Activated CD4-positive, alpha-beta T cell treated with anti-CD3 and anti-CD28 coated beads for 36 hours (primary cell): ENCODE measurements at regions of chrX and their contacts with region 1.

Region 1: DNA sequence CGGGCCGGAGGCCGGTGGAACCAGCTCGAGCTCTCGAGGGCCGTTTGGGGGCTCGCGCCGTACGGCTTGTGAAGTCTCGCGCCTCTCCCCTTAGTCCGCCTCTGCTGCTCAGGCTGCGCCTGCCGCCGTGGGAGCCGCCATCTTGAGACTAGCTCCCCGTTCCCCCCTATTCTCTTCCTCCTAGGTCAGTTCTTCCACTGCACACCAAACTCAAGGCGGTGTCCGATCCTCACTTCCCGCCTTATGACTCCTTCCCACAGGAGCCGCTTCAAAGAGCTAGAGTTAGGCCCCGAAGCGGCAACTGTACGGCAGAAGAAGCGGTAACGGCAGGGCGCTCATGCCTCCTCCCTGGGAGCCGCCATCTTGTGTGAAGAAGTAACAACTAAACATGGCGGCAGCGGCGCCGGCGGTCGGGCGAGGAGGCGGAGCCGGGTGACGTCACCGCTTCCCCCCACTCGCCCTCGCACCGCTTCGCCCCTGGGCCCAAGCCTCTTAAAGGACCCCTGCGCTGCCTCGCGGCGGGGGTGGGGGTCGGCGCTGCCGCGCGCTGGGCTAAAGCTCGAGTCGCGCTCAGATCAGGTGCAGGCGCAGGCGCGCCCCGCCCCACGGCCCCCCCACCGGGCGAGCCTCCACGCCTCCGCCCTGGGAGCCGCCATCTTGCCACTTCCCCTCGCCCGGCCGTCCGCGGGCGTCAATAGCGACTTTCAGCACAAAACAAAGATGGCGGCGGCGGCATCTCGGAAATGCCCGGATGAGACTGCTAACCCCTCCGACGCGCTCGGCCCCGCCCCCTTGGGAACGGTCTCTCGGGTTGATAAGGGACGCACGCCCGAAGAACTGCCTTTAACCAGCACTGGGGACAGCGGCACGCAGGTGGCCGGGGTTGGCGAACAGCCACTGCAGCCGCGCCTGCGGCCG is at the start of gene HCFC1:
- DNase-seq: peak; percentile 94
- ATAC-seq: peak; percentile 34
- H3K4me3 Mint-ChIP-seq: peak within 1 kb of the TSS; percentile 94
- H3K27ac Mint-ChIP-seq: peak within 1 kb of the TSS; percentile 100
- H3K4me1 Mint-ChIP-seq: peaks cover 31% of the 10 kb centered on the region
- H3K27me3 Mint-ChIP-seq: no peaks in the 10 kb centered on the region
- total RNA-seq, gene HCFC1: 99.5 to 147 TPM

Region 2: GRCh38 chrX:153599192-153600031 is 372.3 kb before region 1 on chrX:
- CTCF ChIA-PET with region 1: no interaction called
- POLR2A ChIA-PET with region 1: no interaction called
- intact Hi-C with region 1: loop called in 1 of 2 experiments (anchors 2 kb)
- DNase-seq: peak; percentile 92
- ATAC-seq: peak; percentile 94
- H3K4me3 Mint-ChIP-seq: peak overlapping the region; percentile 81
- H3K27ac Mint-ChIP-seq: peak overlapping the region; percentile 72
- H3K4me1 Mint-ChIP-seq: peaks cover 35% of the 10 kb centered on the region
- H3K27me3 Mint-ChIP-seq: no peaks in the 10 kb centered on the region

Region 3: DNA sequence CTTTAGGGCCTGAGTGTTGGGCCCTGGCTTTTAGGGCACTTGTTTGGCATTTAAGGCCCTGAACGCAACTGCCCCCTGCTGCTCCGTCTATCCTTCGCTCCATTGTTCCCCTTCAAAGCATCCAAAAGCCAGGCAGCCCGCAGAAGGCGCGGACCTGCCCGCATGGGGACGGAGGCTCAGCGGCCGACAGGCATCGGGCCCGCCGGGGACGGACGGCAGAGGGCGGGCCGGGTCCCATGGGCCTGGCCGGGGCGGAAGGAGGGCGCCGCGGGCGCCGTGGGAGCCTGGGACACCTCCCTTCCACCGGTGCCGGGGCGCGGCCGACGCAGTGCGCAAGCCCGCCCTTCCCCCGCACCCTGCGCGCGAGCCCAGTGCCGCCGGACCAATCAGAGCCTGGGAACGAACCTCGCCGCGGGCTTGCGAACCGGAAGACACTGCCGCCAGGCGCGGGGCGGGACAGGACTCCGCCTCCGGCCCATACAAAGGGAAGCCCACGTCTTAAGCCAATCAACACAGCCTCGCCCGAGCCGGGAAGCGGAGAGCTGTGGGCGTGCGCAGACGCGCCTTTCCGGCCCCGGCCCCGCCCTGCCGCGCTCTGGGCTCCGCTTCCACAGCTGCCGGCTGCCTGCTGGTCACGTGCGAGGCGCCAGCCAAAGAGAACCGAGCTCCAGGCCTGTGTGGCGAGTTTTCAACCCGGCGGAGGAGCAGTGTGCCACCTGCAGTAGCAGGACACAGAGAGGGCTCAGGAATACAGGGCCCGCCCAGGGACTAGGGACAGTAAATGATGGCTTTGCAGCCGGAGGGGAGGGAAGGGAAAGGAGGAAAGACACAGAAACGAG is 43.6 kb before region 1 on chrX:
- CTCF ChIA-PET with region 1: interaction called, 6 read pairs
- POLR2A ChIA-PET with region 1: interaction called, 12 read pairs
- intact Hi-C with region 1: loop called (anchors 1 kb)
- DNase-seq: peak; percentile 95
- ATAC-seq: peak; percentile 76
- H3K4me3 Mint-ChIP-seq: peak overlapping the region; percentile 91
- H3K27ac Mint-ChIP-seq: peak overlapping the region; percentile 97
- H3K4me1 Mint-ChIP-seq: peaks cover 29% of the 10 kb centered on the region
- H3K27me3 Mint-ChIP-seq: no peaks in the 10 kb centered on the region

Region 4: DNA sequence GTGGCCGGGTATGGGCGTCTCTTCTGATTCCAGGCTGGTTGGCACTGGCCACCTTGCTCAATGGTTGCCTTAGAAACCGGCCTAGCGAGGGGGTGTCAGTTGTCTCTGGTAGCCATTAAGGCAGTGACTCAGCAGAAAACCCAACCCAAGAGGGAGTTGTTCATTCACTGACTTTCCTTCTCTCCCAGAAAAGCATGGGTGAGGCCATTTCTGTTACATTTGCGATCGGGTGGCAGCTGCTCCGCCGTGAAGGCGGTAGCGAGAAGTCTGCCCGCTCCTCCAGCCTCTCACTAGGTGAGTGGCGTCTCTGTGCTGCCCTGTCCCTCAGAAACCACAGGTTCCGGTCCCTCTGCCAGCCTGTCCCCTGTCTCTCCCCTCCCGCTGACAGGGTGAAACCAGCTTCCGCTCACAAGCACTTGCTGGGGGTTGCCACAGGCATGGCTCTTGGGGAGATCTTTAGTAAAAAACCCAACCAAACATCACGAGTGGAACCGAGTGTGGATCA is 30.6 kb after region 1 on chrX:
- CTCF ChIA-PET with region 1: no interaction called
- POLR2A ChIA-PET with region 1: no interaction called
- intact Hi-C with region 1: no loop called
- DNase-seq: peak; percentile 63
- ATAC-seq: peak; percentile 95
- H3K4me3 Mint-ChIP-seq: peak overlapping the region; percentile 36
- H3K27ac Mint-ChIP-seq: peak overlapping the region; percentile 85
- H3K4me1 Mint-ChIP-seq: peaks cover 13% of the 10 kb centered on the region
- H3K27me3 Mint-ChIP-seq: no peaks in the 10 kb centered on the region

Region 5: DNA sequence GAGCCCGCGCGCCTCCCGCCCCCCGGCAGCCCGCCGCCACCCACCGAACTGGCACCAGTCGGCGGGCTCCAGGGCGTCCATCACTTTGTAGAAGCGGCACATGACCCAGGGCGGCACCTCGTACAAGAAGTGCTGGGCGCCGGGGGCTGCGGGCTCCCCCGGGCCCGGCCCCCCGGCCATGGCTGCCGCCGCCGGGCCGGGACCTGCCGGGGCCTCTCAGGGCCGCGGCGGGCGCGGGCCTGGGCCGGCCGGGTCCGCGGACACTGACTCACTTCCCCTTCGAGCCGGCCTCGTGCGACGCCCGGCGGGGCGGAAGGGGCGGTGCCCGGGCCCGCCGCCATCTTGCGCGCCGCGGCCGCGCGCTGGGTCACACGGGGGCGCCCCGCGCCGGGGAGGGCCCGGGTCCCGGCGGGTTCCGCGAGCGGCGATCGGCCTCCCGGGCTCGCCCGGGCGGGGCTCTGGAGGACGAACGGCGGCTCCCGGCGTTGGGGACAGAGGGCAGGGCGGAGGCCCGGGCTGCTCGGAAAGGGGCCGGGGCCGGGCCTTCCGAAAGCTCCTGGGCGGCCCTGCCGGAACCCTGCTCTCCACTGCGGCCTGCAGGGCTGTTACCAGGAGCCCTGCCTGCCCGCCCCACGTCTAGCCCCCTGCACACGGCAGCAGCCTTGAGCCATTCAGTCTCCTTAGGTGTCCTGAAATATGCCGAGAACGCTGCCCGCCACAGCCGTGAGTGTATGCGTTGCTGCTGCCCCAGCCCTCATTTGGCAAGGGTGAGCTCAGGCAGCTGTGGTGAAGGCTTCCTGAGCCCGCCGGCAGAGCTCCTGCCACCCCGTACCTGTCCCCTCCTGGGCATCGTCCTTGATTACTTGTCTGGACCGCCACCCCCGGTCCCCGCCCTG is 48.2 kb after region 1 on chrX and contains the start of gene IRAK1:
- CTCF ChIA-PET with region 1: interaction called, 5 read pairs
- POLR2A ChIA-PET with region 1: interaction called, 3 read pairs
- intact Hi-C with region 1: loop called (anchors 2 to 5 kb)
- DNase-seq: peak; percentile 73
- ATAC-seq: peak; percentile 61
- H3K4me3 Mint-ChIP-seq: peak within 1 kb of the TSS; percentile 87
- H3K27ac Mint-ChIP-seq: peak within 1 kb of the TSS; percentile 90
- H3K4me1 Mint-ChIP-seq: peaks cover 14% of the 10 kb centered on the region
- H3K27me3 Mint-ChIP-seq: no peaks in the 10 kb centered on the region
- total RNA-seq, gene IRAK1: 84.3 to 93.6 TPM

Region 6: DNA sequence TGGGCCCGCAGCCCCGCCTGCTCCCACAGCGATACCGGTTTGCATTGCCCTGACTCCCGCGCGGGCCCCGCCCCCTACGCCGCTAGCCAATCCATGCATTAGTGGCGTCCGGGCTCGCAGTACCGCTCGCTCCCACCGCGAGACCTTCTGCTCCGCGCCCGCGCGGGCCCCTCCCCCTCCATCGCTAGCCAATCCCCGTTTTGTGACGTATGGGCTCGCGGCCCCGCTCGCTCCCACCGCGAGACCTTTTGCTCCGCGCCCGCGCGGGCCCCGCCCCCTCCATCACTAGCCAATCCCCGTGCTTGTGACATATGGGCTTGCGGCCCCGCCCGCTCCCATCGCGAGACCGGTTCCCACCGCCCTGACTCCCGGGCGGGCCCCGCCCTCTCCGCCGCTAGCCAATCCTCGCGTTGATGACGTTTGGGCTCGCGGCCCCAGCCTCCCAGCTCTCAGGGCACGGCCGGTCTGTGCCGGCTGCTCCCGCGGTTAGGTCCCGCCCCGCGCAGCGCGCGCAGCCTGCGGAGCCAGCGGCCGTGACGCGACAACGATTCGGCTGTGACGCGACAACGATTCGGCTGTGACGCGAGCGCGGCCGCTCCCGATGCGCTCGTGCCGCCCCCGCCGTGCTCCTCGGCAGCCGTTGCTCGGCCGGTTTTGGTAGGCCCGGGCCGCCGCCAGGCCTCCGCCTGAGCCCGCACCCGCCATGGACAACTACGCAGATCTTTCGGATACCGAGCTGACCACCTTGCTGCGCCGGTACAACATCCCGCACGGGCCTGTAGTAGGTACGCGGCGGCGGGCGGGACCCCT is 407.3 kb after region 1 on chrX and contains the start of gene EMD:
- CTCF ChIA-PET with region 1: no interaction called
- POLR2A ChIA-PET with region 1: interaction called, 3 read pairs
- intact Hi-C with region 1: loop called (anchors 1 to 10 kb)
- DNase-seq: peak; percentile 98
- ATAC-seq: peak; percentile 88
- H3K4me3 Mint-ChIP-seq: peak within 1 kb of the TSS; percentile 84
- H3K27ac Mint-ChIP-seq: peak within 1 kb of the TSS; percentile 91
- H3K4me1 Mint-ChIP-seq: peaks cover 23% of the 10 kb centered on the region
- H3K27me3 Mint-ChIP-seq: no peaks in the 10 kb centered on the region
- total RNA-seq, gene EMD: 75.9 to 89.4 TPM

Region 7: GRCh38 chrX:154478728-154479622 is 507.3 kb after region 1 on chrX and contains the start of gene LAGE3:
- CTCF ChIA-PET with region 1: no interaction called
- POLR2A ChIA-PET with region 1: no interaction called
- intact Hi-C with region 1: loop called in 1 of 2 experiments (anchors 2 kb)
- DNase-seq: peak; percentile 97
- ATAC-seq: peak; percentile 96
- H3K4me3 Mint-ChIP-seq: peak within 1 kb of the TSS; percentile 80
- H3K27ac Mint-ChIP-seq: peak within 1 kb of the TSS; percentile 90
- H3K4me1 Mint-ChIP-seq: peaks cover 24% of the 10 kb centered on the region
- H3K27me3 Mint-ChIP-seq: no peaks in the 10 kb centered on the region
- total RNA-seq, gene LAGE3: 34.7 to 43.0 TPM

Region 8: GRCh38 chrX:154762523-154763289 is 791.0 kb after region 1 on chrX and contains the start of gene DKC1:
- CTCF ChIA-PET with region 1: no interaction called
- POLR2A ChIA-PET with region 1: no interaction called
- intact Hi-C with region 1: loop called in 1 of 2 experiments (anchors 5 kb)
- DNase-seq: peak; percentile 97
- ATAC-seq: peak; percentile 90
- H3K4me3 Mint-ChIP-seq: peak within 1 kb of the TSS; percentile 85
- H3K27ac Mint-ChIP-seq: peak within 1 kb of the TSS; percentile 92
- H3K4me1 Mint-ChIP-seq: peaks cover 33% of the 10 kb centered on the region
- H3K27me3 Mint-ChIP-seq: no peaks in the 10 kb centered on the region
- total RNA-seq, gene DKC1: 126 to 130 TPM